Activated naive CD4-positive, alpha-beta T cell treated with anti-CD3 and anti-CD28 coated beads, Interleukin-2, amount 10 ng/mL, durations not matched to agents 7 days and 5 days (primary cell): ENCODE measurements at regions of chr1 and their contacts with region 1.

Region 1: DNA sequence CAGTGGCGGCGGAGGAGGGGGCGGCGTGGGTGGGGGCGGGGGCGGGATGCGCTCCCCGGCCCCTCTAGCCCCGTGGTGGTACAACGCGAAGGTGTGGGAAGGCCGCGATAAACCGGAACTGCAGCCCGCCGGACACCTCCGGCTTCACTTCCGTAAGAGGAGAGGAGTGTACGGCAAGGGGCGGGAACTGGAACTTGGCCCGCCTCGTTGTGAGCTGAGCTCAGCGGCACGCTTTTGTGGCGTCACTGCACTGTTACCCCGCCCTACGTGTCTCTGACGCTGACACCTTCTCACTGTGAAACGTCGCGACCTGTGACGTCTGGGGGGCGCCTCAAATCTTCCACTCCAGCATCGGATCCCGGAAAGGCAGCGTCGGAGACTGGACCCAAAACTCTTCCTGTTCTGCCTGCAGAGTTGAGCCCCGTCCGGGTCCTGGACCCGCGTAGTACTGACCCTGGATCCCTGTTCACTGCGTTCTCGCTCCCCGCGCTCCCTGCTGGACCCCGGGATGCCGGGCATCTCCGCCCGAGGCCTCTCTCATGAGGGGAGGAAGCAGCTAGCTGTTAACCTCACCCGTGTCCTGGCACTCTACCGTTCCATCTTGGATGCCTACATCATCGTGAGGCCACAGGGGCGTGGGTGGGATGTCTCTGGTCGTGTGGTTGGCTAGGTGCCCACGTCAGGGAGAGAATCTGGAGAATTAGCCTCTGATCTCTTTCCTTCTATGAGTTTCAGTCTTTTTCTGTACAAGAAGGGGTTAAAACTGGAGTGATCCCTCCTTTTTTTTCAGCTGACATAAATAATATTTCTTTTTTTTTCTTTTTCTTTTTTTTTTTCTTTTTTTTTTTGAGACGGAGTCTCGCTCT is at the start of gene ISG20L2:
- DNase-seq: peak; percentile 98
- H3K4me3 Mint-ChIP-seq: no peak within 1 kb of the TSS
- H3K27ac Mint-ChIP-seq: no peak within 1 kb of the TSS
- H3K4me1 Mint-ChIP-seq: peaks cover 28% of the 10 kb centered on the region
- H3K27me3 Mint-ChIP-seq: no peaks in the 10 kb centered on the region

Region 2: DNA sequence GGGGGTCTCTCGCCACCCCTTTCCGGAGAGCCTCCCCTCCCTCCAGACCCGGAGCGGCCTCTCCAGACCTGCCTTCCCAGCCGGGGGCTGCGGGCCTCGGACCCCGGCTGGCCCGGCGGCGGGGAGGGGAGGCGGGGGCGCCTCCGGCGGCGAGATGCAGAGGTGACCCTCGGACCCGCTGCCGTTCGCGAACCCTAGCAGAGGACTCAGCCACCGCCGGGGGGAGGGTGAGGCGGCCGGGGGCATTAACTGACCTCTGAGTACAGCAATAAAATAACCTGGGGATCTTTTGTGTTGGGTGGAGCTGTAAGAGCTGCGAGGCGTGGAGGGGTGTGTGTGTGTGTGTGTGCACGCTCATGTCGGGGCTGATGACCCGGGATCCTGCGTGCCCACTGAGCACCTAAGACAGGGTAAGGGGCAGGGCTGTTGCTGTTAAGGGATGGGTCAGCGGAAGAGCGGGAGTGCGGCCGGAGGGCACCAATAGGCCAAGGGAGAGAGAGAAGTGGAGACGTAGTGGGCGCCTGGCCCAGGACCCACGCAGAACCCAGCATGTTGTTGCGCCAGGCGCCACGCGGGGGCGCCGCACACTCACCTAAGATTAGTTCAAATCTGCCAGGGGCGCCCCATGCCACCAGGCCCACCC is 103.3 kb before region 1 on chr1:
- CTCF ChIA-PET with region 1: interaction called, 15 read pairs
- DNase-seq: peak; percentile 74
- H3K4me3 Mint-ChIP-seq: peak overlapping the region; percentile 4
- H3K27ac Mint-ChIP-seq: peak overlapping the region; percentile 31
- H3K4me1 Mint-ChIP-seq: peaks cover 12% of the 10 kb centered on the region
- H3K27me3 Mint-ChIP-seq: peaks cover 84% of the 10 kb centered on the region

Region 3: GRCh38 chr1:156689035-156689952 is 39.5 kb before region 1 on chr1:
- CTCF ChIA-PET with region 1: interaction called, 224 read pairs
- DNase-seq: peak; percentile 84
- H3K4me3 Mint-ChIP-seq: no peak overlapping the region
- H3K27ac Mint-ChIP-seq: no peak overlapping the region
- H3K4me1 Mint-ChIP-seq: peaks cover 34% of the 10 kb centered on the region
- H3K27me3 Mint-ChIP-seq: peaks cover 81% of the 10 kb centered on the region

Region 4: DNA sequence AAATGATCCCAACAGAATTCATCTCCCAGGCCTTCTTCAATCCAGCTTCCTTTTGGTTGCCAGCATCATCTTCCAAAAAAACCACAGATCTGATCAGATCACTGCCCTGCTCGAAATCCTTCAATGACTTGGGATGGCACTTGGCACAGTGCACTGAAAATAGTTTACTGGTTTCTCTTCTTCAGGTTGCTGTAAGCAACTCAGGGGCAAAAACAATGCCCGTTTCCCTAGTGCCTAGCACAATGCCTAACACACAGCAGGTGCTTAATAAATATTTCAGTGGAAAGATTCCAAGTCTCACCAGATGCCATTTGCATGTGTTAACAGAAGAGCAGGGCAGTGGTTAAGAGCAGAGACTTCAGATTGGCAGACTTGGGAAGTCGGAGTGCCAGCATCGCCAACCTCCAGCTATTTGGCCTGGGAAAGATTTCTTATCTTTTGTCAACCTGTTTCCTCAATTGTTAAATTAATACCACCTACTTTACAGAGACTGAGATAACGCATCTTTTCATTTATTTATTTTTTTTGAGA is 11.5 kb before region 1 on chr1:
- CTCF ChIA-PET with region 1: interaction called, 34 read pairs
- DNase-seq: no peak
- H3K4me3 Mint-ChIP-seq: no peak overlapping the region
- H3K27ac Mint-ChIP-seq: no peak overlapping the region
- H3K4me1 Mint-ChIP-seq: no peaks in the 10 kb centered on the region
- H3K27me3 Mint-ChIP-seq: no peaks in the 10 kb centered on the region

Region 5: GRCh38 chr1:156751758-156752757 is 23.2 kb after region 1 on chr1:
- CTCF ChIA-PET with region 1: interaction called, 40 read pairs
- DNase-seq: peak; percentile 99
- H3K4me3 Mint-ChIP-seq: peak overlapping the region; percentile 91
- H3K27ac Mint-ChIP-seq: peak overlapping the region; percentile 92
- H3K4me1 Mint-ChIP-seq: peaks cover 56% of the 10 kb centered on the region
- H3K27me3 Mint-ChIP-seq: no peaks in the 10 kb centered on the region

Region 6: GRCh38 chr1:156781585-156782186 is 52.9 kb after region 1 on chr1:
- CTCF ChIA-PET with region 1: interaction called, 12 read pairs
- DNase-seq: no peak
- H3K4me3 Mint-ChIP-seq: no peak overlapping the region
- H3K27ac Mint-ChIP-seq: no peak overlapping the region
- H3K4me1 Mint-ChIP-seq: peaks cover 27% of the 10 kb centered on the region
- H3K27me3 Mint-ChIP-seq: no peaks in the 10 kb centered on the region

Region 7: DNA sequence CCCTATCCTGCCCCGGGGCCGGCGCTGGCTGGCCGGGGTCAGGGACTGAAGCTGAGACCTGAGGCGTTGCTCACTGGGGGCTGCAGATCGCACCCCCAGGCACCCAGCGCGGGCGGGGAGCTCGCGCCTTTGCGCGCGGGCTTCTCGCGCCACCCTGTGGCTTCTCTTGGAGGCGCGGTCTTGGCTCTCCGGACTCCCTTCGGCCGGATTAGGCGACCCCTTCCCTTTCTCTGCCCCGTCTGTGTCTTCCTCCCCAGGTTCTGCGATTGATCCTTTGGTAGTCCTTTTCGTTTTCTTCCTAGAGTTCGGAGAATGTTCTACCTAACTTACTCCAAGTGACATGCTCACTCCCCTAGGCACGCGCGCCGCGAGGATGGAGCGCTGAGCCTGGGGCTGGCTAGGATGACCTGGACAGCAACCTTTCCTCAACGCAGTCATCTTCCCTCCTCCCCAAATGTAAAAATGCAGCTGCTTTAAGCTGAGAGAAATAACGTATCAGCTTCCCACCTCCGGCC is 131.3 kb after region 1 on chr1:
- CTCF ChIA-PET with region 1: interaction called, 112 read pairs
- DNase-seq: peak; percentile 65
- H3K4me3 Mint-ChIP-seq: peak overlapping the region; percentile 65
- H3K27ac Mint-ChIP-seq: no peak overlapping the region
- H3K4me1 Mint-ChIP-seq: peaks cover 54% of the 10 kb centered on the region
- H3K27me3 Mint-ChIP-seq: peaks cover 90% of the 10 kb centered on the region

Region 8: GRCh38 chr1:157008502-157008901 is 279.7 kb after region 1 on chr1:
- CTCF ChIA-PET with region 1: no interaction called
- DNase-seq: no peak
- H3K4me3 Mint-ChIP-seq: no peak overlapping the region
- H3K27ac Mint-ChIP-seq: no peak overlapping the region
- H3K4me1 Mint-ChIP-seq: no peaks in the 10 kb centered on the region
- H3K27me3 Mint-ChIP-seq: peaks cover 41% of the 10 kb centered on the region